ENCODE measurements at regions of chr7 and their contacts with region 1.

Region 1: DNA sequence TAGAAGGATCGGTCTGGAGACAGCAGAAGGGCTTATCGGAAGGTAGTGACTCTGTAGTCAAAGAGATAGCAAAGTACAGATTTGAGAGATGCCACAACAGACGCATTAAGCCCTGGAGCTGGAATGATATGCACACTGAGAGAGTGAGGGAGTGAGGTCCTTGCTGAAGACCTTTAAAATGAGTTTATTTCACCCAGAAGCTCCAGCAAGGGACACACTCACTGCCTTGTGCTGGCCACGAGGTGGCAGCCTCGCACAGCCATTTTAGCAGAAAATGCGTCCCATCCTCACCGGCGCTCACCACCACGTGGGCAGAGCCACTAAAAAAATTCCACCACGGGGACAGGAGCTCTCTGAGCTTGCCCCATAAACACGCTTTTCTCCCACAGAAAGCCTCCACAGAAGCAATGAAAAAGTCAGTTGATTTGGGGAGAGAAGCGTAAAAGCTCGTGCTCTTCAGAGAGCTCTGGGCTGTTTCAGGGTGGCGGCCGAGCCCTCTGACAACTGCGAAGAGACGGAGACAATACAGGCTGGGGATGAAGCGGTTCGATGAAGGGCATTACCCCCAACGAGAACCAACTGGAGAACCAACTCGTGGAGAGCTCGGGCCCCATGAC is 163.0 kb upstream of the KLF14 start:
- DNase-seq: peak; percentile 80 to 93
- ATAC-seq: peak; percentile 74
- H3K4me3 ChIP-seq: no peak overlapping the region
- H3K27ac ChIP-seq: peak overlapping the region in 1 of 2 donors; percentile 18
- H3K4me1 ChIP-seq: peaks cover 0 to 5% of the 10 kb centered on the region in 2 donors
- H3K27me3 ChIP-seq: no peaks in the 10 kb centered on the region

Region 2: DNA sequence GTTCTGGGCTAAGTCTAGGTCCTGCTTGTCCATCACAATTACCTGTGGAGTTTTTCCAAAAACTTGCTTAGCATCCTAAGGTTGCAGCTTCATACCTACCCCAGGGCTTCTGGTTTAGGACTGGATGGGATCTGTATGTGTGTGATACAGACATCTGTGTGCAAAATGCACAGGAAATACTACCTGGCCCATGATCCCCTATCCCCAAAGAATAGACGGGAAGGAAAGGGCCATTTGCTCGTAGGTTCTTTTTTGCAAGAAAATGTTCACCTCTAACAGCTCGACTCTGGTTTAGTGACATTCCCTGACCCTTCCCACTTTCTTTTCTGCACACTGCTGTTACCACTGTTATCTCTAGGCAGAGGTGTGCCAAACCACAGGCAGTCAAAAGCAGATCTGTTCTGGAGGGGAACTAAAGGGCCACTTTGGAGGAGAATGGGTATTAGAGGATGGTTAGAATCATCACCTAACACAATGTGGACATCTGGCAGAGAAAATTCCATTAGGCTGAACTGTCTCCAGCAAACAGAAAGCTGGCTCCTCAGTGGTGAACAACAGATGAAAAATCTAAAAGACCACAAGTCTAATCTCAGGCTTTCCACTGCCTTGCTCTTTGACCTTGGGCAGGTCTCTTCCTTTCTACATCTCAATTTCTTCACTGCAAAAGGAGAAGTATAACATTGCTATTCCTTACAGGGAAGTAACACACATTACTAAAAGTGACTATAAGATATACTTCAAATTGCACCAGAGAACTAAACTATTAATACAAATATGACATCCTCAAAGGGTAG is 1051.6 kb before region 1 on chr7:
- intact Hi-C with region 1: no loop called
- DNase-seq: no peak
- ATAC-seq: peak; percentile 26
- H3K4me3 ChIP-seq: no peak overlapping the region
- H3K27ac ChIP-seq: peak overlapping the region in 1 of 2 donors; percentile 88
- H3K4me1 ChIP-seq: peaks cover 11% of the 10 kb centered on the region in 2 donors
- H3K27me3 ChIP-seq: no peaks in the 10 kb centered on the region

Region 3: DNA sequence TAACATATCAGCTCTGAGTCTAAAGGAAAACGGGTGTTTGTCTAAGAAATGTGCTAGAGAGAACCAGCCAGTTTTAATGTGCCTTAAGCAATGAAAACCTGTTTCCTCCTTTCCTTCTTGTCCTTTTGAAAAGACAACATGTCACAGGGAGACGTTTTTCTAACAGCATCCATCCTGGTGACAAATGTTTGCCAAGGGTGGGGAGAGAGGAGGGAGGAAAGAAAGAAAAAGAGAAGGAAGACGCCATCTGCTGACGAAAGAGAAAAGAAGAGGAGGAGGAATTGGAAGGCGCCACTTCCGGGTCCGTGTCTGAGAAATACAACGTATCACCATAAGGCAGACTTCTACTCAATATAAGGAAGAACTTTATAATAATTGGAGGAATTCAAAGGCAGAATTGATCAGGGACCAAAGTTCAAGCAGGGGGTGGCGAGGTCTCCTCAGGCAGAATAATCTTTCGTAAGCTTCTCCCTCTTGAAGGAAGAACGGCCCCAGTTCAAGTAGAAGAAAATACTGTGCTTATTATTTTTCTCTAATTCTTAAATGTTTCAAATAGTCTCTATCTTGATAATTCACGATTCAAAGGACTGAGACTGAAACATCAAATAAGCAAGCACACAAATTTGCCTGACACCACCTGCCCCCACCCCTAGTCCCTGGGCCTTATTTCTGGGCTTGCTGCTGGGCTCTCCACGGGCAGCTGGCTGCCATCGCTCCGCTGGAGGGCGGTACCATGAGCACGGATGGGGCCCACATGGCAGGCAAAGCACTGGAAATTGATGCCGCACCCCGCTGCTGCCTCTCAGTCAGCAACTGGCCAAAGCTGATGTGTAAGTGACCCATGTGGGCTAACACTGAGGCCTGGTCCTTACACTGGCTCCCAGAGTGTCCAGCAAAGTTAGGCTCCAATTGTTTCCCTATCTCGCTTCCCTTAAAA is 110.7 kb after region 1 on chr7:
- intact Hi-C with region 1: loop called (anchors 5 to 10 kb)
- DNase-seq: peak; percentile 66 to 81
- ATAC-seq: peak; percentile 75
- H3K4me3 ChIP-seq: no peak overlapping the region
- H3K27ac ChIP-seq: peak overlapping the region in 1 of 2 donors; percentile 25
- H3K4me1 ChIP-seq: peaks cover 6 to 9% of the 10 kb centered on the region in 2 donors
- H3K27me3 ChIP-seq: no peaks in the 10 kb centered on the region

Region 4: GRCh38 chr7:131040467-131040932 is 143.5 kb after region 1 on chr7:
- intact Hi-C with region 1: loop called in 1 of 2 experiments (anchors 5 kb)
- DNase-seq: no peak
- ATAC-seq: peak; percentile 77
- H3K4me3 ChIP-seq: no peak overlapping the region
- H3K27ac ChIP-seq: no peak overlapping the region
- H3K4me1 ChIP-seq: peaks cover 0 to 4% of the 10 kb centered on the region in 2 donors
- H3K27me3 ChIP-seq: no peaks in the 10 kb centered on the region

Region 5: DNA sequence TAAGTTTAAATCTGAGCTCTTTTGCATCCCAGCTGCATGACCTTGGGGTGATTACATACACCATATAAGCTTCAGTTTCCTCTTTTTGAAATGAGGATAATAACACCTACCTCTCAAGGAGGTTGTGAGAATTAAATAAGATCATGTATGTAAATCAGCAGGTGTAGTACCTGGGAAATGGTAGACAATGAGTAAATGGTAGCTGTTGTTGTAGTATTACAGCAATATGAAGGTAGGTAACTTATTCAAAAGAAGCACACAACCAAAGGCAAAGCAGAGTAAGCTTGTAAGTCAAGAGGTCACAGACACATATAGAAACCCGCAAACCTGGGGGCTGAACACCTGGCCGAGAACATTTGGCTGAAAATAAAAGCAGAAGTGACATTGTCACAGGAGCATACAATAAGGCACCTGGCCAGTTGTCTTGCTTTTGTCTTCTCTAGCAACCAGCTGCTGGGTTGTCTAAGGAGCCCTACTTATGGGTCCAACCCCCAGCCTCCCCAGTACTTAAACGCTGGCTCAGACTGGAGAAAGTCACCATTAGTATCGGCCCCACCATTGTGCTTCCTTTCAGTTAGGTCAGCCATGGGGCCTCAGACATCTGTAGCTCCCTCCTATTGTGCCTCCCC is 227.1 kb after region 1 on chr7:
- intact Hi-C with region 1: no loop called
- DNase-seq: no peak
- ATAC-seq: no peak
- H3K4me3 ChIP-seq: no peak overlapping the region
- H3K27ac ChIP-seq: no peak overlapping the region
- H3K4me1 ChIP-seq: no peaks in the 10 kb centered on the region
- H3K27me3 ChIP-seq: peaks cover 0 to 1% of the 10 kb centered on the region in 2 donors

Region 6: DNA sequence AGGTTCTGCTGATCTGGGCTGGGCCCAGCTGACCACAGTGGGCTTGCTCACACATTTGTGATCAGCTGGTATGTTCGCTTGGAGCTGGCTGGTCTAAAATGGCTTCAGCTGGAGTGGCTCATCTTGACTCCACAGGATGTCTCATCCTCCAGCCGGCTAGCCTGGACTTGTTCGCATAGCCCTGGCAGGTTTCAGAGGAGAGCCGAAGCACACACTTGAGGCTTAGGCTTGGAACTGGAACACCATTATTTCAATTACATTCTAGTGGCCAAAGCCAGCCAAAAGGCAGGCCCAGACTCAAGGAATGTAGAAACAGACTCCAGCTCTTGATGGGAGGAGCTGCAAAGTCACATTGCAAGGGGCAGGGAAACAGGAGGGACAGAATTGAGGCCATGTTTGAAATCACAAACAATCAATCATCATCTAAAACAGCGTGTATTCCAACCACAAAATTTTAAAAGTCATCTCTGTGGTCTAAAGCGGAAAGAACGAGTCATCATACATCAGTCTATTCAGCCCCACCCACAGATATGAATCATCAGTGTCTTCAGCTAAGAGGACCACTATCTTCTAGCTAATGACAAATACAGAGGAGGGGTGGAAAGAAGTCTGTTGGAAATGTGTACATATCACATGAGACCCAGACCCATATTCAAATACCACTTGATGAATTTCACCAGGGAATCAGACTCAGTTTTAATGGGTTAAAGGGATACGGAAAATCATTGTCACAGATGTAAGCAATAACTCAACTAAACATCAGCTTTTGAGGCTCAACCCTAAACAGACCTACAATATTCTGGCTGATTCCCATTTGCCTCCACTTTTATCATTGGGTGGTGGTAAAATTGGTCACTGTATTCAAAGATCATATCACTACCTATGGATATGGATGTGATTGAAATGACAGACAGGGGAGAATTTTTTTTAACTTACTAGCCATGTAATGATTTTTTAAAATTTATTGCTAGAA is 291.6 kb after region 1 on chr7:
- intact Hi-C with region 1: no loop called
- DNase-seq: peak in 1 of 2 donors; percentile 66
- ATAC-seq: peak; percentile 59
- H3K4me3 ChIP-seq: no peak overlapping the region
- H3K27ac ChIP-seq: no peak overlapping the region
- H3K4me1 ChIP-seq: no peaks in the 10 kb centered on the region
- H3K27me3 ChIP-seq: no peaks in the 10 kb centered on the region

Region 7: DNA sequence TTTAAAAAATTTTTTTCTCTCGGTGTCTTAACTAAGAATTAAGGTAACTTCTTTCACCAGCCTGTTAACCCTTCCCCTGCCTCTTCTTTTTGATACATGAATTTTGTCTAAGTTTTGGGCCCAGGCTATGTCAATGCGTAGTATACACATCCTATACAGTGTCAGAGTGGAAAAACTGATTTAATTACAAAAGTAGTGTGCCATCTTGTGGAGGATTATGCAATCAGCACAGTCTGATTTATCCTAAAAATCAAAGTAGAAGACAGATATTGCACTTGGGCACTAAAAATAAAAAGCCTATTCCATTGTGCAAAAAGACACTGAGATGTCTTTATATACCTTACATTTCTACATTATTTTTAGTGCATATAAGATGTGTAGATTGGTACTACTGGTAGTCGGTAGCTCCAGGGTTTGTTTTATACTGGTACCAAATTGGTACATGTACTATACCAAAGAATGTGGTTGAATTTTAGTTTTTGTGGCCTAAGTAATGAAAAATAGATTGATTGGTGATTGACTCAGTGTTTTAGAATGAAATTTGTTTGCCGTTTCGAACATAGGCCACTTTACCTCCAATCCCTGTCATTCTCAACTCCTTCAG is 527.3 kb after region 1 on chr7:
- intact Hi-C with region 1: loop called in 1 of 2 experiments (anchors 10 kb)
- DNase-seq: no peak
- ATAC-seq: no peak
- H3K4me3 ChIP-seq: no peak overlapping the region
- H3K27ac ChIP-seq: no peak overlapping the region
- H3K4me1 ChIP-seq: no peaks in the 10 kb centered on the region
- H3K27me3 ChIP-seq: no peaks in the 10 kb centered on the region

Measured in aorta (tissue), 5 donors.